ENCODE measurements at regions of chr20 and their contacts with region 1.

Region 1: DNA sequence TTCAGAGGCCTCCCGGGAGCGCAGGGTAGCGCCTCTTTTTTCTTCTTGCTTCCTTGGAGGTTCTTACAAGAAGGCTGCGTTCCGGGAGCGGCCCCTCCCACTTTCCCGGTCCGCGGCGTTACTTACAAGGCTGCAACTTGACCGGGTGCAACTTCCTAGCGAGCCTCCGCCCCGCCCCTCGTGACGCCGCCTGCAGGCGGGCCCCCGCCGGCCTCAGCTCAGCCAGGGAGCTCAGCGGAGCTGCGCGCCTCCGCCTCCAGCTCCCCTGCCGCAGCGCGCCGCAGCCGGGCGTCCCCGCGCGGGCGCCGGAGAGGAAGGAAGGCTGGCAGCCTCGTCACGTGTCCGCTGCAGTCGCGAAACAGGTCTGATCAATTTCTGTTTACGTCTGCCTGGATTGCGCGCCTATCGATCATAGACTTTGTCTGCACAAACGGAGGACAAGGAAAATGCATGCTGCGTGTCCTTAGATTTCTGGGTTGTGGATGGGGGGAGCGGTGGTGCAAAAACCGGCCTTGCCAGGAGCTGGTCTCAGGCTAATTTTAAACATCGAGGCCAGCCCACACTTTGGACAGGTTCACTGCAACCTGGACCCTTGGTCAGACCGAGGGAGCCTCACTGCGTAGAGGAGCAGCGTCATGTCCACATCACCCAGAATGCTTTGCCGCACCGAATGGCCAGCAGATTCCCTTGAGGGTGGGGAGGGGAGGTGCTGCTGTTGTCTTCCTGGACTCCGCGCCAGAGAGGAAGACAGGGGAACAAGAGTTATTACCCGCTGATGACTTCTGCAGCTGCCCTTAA is at the starts of genes FAM217B and PPP1R3D:
- DNase-seq: peak; percentile 94
- H3K4me3 Mint-ChIP-seq: peak within 1 kb of the TSS; percentile 95
- H3K27ac Mint-ChIP-seq: peak within 1 kb of the TSS; percentile 96
- H3K4me1 Mint-ChIP-seq: peaks cover 27% of the 10 kb centered on the region
- H3K27me3 Mint-ChIP-seq: no peaks in the 10 kb centered on the region
- CTCF ChIP-seq: no peak
- total RNA-seq, gene FAM217B: 5.6 and 8.6 TPM in 2 replicates
- total RNA-seq, gene PPP1R3D: 2.4 and 3.5 TPM in 2 replicates

Region 2: GRCh38 chr20:59850018-59850641 is 90.2 kb before region 1 on chr20:
- CTCF ChIA-PET with region 1: interaction called, 14 read pairs
- POLR2A ChIA-PET with region 1: interaction called, 36 read pairs
- intact Hi-C with region 1: no loop called
- DNase-seq: peak; percentile 55
- H3K4me3 Mint-ChIP-seq: no peak overlapping the region
- H3K27ac Mint-ChIP-seq: no peak overlapping the region
- H3K4me1 Mint-ChIP-seq: peaks cover 13% of the 10 kb centered on the region
- H3K27me3 Mint-ChIP-seq: no peaks in the 10 kb centered on the region
- CTCF ChIP-seq: peak; percentile 70

Region 3: DNA sequence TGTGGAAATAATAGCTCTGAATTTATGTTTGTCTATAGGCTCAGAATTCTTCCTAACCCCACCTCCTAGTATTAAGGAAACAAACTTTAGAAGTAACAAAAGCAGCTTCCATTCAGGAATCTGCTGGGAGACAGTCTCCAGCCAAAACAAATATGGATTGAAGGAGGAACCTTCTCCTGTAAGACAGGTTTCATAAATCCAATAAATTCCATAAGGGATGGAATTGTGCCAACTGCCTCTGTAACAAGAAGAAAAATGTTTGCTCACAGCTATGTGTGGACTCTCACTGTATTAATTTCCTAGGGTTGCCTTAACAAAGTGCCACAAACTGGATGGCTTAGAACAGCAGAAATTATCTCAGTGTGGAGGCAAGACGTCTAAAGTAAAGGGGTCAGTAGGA is 14.4 kb before region 1 on chr20:
- CTCF ChIA-PET with region 1: interaction called, 7 read pairs
- POLR2A ChIA-PET with region 1: interaction called, 17 read pairs
- intact Hi-C with region 1: no loop called
- DNase-seq: peak; percentile 16
- H3K4me3 Mint-ChIP-seq: no peak overlapping the region
- H3K27ac Mint-ChIP-seq: no peak overlapping the region
- H3K4me1 Mint-ChIP-seq: no peaks in the 10 kb centered on the region
- H3K27me3 Mint-ChIP-seq: peaks cover 12% of the 10 kb centered on the region
- CTCF ChIP-seq: no peak

Region 4: DNA sequence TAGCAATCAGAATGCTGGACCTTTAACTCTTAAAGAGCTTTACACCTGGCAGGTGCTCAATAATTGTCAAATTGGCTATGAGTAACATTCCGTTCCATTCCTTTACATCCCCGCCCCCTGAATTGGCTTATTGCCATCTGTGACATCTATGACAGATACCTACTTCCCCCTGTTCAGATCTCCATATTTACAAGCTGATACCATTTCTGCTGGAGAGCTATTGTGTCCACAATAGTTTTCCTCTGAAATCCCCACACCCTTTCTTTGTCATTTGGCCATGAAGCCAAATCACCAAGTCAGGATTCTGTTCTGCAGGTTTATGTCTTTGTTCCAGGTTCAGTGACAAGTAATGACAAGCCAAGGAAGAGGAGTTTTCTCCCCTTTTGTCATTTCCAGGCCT is 21.1 kb after region 1 on chr20:
- CTCF ChIA-PET with region 1: interaction called, 3 read pairs
- POLR2A ChIA-PET with region 1: interaction called, 23 read pairs
- intact Hi-C with region 1: no loop called
- DNase-seq: no peak
- H3K4me3 Mint-ChIP-seq: no peak overlapping the region
- H3K27ac Mint-ChIP-seq: no peak overlapping the region
- H3K4me1 Mint-ChIP-seq: peaks cover 12% of the 10 kb centered on the region
- H3K27me3 Mint-ChIP-seq: no peaks in the 10 kb centered on the region
- CTCF ChIP-seq: no peak

Region 5: DNA sequence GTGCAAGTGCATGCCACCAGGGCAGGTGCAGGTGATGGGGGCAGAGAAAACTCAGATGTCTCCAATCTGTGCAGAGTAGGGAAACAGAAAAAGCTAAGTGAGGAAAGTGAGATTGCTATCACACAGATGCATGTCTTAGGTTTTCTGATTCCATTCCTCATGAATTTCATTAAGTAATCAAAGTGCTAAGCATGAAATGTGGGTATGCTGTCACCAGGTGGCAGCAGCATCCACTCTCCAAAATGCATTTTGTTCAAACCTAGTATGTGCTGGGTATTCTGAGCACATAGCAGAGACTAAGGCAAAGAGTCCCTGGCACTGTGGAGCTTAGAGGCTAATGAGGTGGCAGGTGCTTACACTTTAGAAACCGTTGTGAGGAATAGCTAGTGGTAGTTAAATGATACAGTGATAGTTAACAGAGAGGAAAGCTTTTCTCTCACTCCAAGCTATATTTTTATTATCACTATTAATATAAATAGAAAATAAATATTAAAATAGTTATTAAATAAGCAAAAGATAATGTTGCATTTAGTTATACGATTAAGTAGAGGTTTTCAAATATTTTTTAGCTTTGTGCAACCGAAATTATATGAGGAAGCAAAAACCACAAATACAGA is 197.4 kb after region 1 on chr20:
- CTCF ChIA-PET with region 1: interaction called, 3 read pairs
- POLR2A ChIA-PET with region 1: interaction called, 13 read pairs
- intact Hi-C with region 1: loop called (anchors 5 kb)
- DNase-seq: peak; percentile 65
- H3K4me3 Mint-ChIP-seq: peak overlapping the region; percentile 80
- H3K27ac Mint-ChIP-seq: no peak overlapping the region
- H3K4me1 Mint-ChIP-seq: peaks cover 1% of the 10 kb centered on the region
- H3K27me3 Mint-ChIP-seq: peaks cover 12% of the 10 kb centered on the region
- CTCF ChIP-seq: peak; percentile 71

Region 6: DNA sequence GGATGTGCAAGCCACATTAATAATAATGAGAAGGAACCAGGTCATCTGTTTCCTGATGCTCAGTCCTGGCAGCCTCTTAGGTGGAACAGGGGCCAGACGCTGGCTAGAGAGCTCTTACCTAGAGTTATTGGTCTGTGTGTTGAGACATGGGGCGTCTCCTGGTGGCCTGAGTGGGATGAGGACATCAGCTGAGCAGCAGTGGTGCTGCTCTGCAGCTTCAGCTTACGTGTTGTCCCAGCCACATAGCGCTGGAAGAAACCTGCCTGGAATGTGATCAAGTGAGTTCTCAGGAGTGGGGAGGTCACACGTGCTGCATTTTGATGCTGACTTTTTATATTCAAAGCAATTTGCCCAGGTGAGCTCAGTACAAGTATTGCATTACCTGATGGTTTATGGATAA is 373.2 kb after region 1 on chr20:
- CTCF ChIA-PET with region 1: no interaction called
- POLR2A ChIA-PET with region 1: no interaction called
- intact Hi-C with region 1: no loop called
- DNase-seq: no peak
- H3K4me3 Mint-ChIP-seq: no peak overlapping the region
- H3K27ac Mint-ChIP-seq: no peak overlapping the region
- H3K4me1 Mint-ChIP-seq: no peaks in the 10 kb centered on the region
- H3K27me3 Mint-ChIP-seq: peaks cover 7% of the 10 kb centered on the region
- CTCF ChIP-seq: no peak

Measured in MCF 10A (cell line).